BJ (cell line): ENCODE measurements at regions of chr3 and their contacts with region 1.

Region 1: DNA sequence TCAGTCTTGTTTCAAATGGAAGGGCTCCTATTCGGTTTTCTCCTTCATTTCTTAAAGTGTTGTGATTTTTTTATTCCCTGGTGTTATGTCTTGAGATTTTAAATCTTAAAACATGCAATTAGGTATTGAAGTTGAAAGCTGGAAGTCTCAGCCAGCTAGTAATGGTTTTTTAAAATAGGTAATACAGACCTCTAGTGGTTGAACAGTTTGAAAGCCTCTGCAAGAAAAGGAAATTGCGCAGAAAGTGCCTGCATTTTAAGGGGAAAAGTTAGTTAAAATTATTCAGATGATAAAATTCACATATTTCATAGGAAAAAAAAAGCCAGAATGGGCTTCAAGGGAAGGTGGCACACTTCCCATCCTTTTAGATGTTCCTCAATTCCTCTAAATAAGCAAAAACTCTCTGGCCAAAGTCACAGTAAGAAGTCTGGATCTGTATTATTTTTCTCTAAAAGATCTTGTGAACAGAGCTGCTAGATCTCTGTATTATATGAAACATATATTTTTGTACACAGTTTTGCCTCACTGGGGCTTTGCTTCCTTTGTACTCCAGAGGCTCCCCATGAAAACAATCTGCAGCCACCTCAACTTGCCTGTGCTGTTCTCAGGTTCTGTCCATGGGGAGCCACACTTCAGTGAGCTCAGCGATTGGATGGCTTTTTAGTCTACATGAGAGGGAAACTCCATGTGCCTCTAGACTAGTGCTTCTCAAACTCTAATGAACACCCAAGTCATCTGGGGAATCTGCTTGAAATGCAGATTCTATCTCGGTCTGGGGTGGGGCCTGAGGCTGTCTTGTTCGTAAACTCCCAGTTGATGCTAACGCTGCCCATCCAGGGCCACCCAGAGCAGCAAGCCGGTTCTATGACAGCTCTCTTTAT is 21.5 kb downstream of the AGTR1 start:
- DNase-seq: no peak
- H3K4me3 ChIP-seq: no peak overlapping the region
- H3K27me3 ChIP-seq: no peaks in the 10 kb centered on the region
- CTCF ChIP-seq: peak; percentile 49

Region 2: GRCh38 chr3:148379763-148380382 is 339.3 kb before region 1 on chr3:
- CTCF ChIA-PET with region 1: interaction called, 30 read pairs
- POLR2A ChIA-PET with region 1: no interaction called
- DNase-seq: no peak
- H3K4me3 ChIP-seq: no peak overlapping the region
- H3K27me3 ChIP-seq: no peaks in the 10 kb centered on the region
- CTCF ChIP-seq: peak; percentile 46